Adrenal gland (tissue), 19 donors: ENCODE measurements at regions of chr6 and their contacts with region 1.

Region 1: GRCh38 chr6:122530440-122531046 is 58.9 kb upstream of the SERINC1 start:
- DNase-seq: peak; percentile 38 to 78 (median 60)
- H3K4me3 ChIP-seq: no peak overlapping the region
- H3K27ac ChIP-seq: no peak overlapping the region
- H3K4me1 ChIP-seq: no peaks in the 10 kb centered on the region
- H3K27me3 ChIP-seq: no peaks in the 10 kb centered on the region
- CTCF ChIP-seq: peak; percentile 75 to 91 (median 91)
- POLR2A ChIP-seq: no peak

Region 2: DNA sequence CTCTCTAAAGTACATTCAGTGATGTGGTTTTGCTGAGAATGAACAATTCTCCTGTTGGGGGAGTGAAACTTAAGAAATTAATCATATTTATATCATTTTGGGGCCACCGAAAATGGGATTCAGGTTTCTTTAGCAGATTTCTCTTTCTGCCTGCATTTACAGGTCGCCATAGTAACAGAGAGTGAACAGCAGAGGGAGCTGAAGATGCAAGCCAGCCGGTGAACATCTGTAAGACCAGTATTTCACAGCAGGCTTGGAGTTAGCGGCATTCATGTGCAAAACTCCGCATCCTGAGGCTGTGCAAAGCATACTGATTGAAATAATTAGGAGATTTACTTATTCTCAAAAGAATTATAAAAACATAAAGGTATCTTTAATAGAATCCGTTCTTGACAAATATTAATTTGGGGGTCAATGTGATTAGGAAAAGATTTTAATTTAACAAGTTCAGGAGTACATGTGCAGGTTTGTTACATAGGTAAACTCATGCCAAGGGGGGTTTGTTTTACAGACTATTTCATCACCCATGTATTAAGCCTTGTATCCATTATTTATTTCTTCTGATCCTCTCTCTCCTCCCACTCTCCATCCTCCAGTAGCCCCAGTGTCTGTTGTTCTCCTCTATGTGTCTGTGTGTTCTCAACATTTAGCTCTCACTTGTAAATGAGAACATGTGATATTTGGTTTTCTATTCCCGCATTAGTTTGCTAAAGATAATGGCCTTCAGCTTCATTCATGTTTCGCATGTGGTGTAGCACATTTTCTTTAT is 148.9 kb before region 1 on chr6:
- intact Hi-C with region 1: loop called in 1 of 2 experiments (anchors 5 kb)
- DNase-seq: peak; percentile 69 to 89 (median 76)
- H3K4me3 ChIP-seq: no peak overlapping the region
- H3K27ac ChIP-seq: no peak overlapping the region
- H3K4me1 ChIP-seq: no peaks in the 10 kb centered on the region
- H3K27me3 ChIP-seq: no peaks in the 10 kb centered on the region
- CTCF ChIP-seq: peak; percentile 68 to 86 (median 84)
- POLR2A ChIP-seq: no peak